IMR-90 (cell line): ENCODE measurements at regions of chr20 and their contacts with region 1.

Region 1: DNA sequence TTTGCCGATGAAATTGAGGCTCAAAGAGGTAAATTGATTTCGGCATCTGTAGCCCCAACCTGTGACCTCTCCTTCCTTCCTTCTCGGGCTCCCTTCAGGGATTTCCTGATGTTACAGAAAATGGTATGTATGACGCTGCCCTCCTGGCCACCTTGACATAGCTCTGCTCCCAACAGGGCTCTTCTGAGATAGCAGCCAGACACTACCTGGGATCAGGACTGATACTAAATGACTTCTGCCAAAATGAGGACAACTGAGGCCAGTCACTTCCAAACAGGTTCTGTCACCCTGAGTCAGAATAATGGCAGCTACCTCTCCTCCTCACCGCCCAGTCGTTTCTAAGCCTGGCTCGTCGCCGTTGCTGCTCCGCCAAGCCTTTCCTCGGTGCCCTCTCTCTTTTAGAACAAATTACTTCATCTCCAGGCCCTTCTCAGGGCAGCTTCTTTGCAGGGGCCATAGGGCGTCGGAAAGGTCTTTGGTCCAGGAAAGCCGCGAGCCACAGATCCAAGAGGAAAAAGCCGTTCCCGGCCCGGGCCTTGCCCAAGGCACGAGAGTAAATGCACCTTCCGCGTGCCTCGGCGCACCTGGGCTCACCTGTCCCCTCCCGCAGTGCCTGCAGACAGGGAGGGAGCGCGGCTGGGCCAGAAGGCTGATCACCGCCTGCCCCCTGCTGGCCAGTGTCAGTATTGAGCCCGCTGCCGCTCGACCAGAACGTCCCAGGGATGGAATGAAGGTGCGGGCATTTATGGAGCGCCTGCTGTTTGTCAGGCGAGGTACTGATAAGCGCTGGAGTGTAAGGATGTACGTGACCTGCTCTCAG is 904 bp upstream of the LPIN3 start:
- DNase-seq: peak; percentile 45
- ATAC-seq: peak; percentile 88
- H3K4me3 ChIP-seq: peak overlapping the region; percentile 11; the same call in 1 of the 2 replicates
- H3K27ac ChIP-seq: no peak overlapping the region
- H3K4me1 ChIP-seq: peaks cover 16% of the 10 kb centered on the region
- H3K27me3 ChIP-seq: no peaks in the 10 kb centered on the region
- CTCF ChIP-seq: peak; percentile 88
- POLR2A ChIP-seq: no peak
- RAD21 ChIP-seq: peak; percentile 98

Region 2: DNA sequence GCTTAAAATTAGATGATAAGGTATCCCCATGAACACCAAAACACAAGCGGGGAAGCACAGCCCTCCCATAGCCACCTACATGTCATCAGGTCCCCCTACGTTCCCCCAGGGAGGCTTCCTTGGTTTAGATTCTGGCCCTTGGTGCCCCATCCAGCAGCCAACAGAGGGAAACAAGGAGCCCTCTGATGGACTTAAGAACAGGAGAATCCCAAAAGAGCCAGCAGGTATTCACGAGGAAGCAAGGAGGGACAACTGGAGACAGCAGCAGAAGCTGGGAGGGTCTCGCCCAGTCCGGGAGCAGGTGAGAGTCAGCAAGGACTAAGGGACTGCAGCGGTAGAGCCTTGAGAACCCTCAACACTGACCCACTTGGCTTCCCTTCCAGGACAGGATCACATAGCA is 369.5 kb before region 1 on chr20:
- CTCF ChIA-PET with region 1: no interaction called
- POLR2A ChIA-PET with region 1: no interaction called
- dilution Hi-C with region 1: no loop called
- in situ Hi-C with region 1: loop called (anchors 10 kb)
- intact Hi-C with region 1: loop called (anchors 1 kb)
- DNase-seq: no peak
- ATAC-seq: no peak
- H3K4me3 ChIP-seq: no peak overlapping the region
- H3K27ac ChIP-seq: no peak overlapping the region
- H3K4me1 ChIP-seq: peaks cover 2% of the 10 kb centered on the region; the same call in 1 of the 2 replicates
- H3K27me3 ChIP-seq: no peaks in the 10 kb centered on the region
- CTCF ChIP-seq: peak; percentile 23; the same call in 1 of the 2 replicates
- POLR2A ChIP-seq: no peak
- RAD21 ChIP-seq: no peak

Region 3: GRCh38 chr20:41136680-41137613 is 202.8 kb before region 1 on chr20 and contains the start of gene PLCG1:
- CTCF ChIA-PET with region 1: interaction called, 9 read pairs
- POLR2A ChIA-PET with region 1: no interaction called
- dilution Hi-C with region 1: no loop called
- in situ Hi-C with region 1: no loop called
- intact Hi-C with region 1: loop called (anchors 1 kb)
- DNase-seq: peak; percentile 67
- ATAC-seq: peak; percentile 84
- H3K4me3 ChIP-seq: peak within 1 kb of the TSS; percentile 98
- H3K27ac ChIP-seq: peak within 1 kb of the TSS; percentile 94
- H3K4me1 ChIP-seq: peaks cover 22% of the 10 kb centered on the region
- H3K27me3 ChIP-seq: no peaks in the 10 kb centered on the region
- CTCF ChIP-seq: no peak
- POLR2A ChIP-seq: peak; percentile 62
- RAD21 ChIP-seq: no peak
- total RNA-seq, gene PLCG1: 54.7 and 59.1 TPM in 2 replicates

Region 4: GRCh38 chr20:41276317-41276751 is 63.4 kb before region 1 on chr20:
- CTCF ChIA-PET with region 1: no interaction called
- POLR2A ChIA-PET with region 1: no interaction called
- dilution Hi-C with region 1: no loop called
- in situ Hi-C with region 1: no loop called
- intact Hi-C with region 1: no loop called
- DNase-seq: no peak
- ATAC-seq: no peak
- H3K4me3 ChIP-seq: no peak overlapping the region
- H3K27ac ChIP-seq: no peak overlapping the region
- H3K4me1 ChIP-seq: peaks cover 13% of the 10 kb centered on the region
- H3K27me3 ChIP-seq: no peaks in the 10 kb centered on the region
- CTCF ChIP-seq: no peak
- POLR2A ChIP-seq: no peak
- RAD21 ChIP-seq: no peak

Region 5: GRCh38 chr20:41411391-41411847 is 71.7 kb after region 1 on chr20:
- CTCF ChIA-PET with region 1: no interaction called
- POLR2A ChIA-PET with region 1: no interaction called
- dilution Hi-C with region 1: no loop called
- in situ Hi-C with region 1: no loop called
- intact Hi-C with region 1: loop called (anchors 1 kb)
- DNase-seq: peak; percentile 28
- ATAC-seq: peak; percentile 51
- H3K4me3 ChIP-seq: no peak overlapping the region
- H3K27ac ChIP-seq: no peak overlapping the region
- H3K4me1 ChIP-seq: no peaks in the 10 kb centered on the region
- H3K27me3 ChIP-seq: no peaks in the 10 kb centered on the region
- CTCF ChIP-seq: peak; percentile 45
- POLR2A ChIP-seq: no peak
- RAD21 ChIP-seq: peak; percentile 57